ENCODE measurements at regions of chr3 and their contacts with region 1.

Region 1: GRCh38 chr3:39000008-39000450 is 51.7 kb downstream of the SCN11A start:
- DNase-seq: no peak
- ATAC-seq: peak; percentile 64
- H3K4me3 Mint-ChIP-seq: no peak overlapping the region
- H3K27ac Mint-ChIP-seq: no peak overlapping the region
- H3K4me1 Mint-ChIP-seq: no peaks in the 10 kb centered on the region
- H3K27me3 Mint-ChIP-seq: peaks cover 3% of the 10 kb centered on the region
- CTCF ChIP-seq: peak; percentile 84

Region 2: DNA sequence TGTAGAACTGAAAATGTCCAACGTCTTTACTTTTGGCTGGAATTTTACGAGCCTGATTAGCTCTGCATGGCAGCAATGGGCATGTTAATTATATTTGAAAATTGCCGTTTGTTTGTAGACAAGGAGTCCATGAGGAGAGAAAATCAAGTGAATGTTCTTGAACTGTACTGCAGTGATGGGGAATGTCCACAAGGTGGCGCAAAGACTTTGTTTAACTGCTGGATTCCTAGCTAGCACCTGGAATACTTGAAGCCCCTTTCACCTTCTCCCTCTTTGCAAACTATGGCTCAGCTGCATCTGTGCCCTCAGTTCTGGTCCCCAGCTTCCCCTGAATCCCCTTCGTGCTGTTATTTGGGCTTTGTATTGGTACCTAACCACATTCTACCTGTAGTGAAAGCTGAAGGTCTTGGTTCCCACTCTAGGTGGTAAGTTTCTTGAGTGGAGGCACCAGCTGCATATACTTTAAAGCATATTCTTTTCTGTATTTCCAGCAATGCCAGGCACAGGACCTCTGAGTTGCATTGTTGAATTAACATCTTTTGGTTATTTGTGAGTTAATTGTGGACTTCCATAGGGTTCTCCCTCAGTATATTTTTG is 478.5 kb before region 1 on chr3:
- CTCF ChIA-PET with region 1: interaction called, 22 read pairs
- POLR2A ChIA-PET with region 1: no interaction called
- intact Hi-C with region 1: no loop called
- DNase-seq: peak; percentile 78
- ATAC-seq: peak; percentile 85
- H3K4me3 Mint-ChIP-seq: no peak overlapping the region
- H3K27ac Mint-ChIP-seq: no peak overlapping the region
- H3K4me1 Mint-ChIP-seq: peaks cover 22% of the 10 kb centered on the region
- H3K27me3 Mint-ChIP-seq: no peaks in the 10 kb centered on the region
- CTCF ChIP-seq: peak; percentile 93

Region 3: DNA sequence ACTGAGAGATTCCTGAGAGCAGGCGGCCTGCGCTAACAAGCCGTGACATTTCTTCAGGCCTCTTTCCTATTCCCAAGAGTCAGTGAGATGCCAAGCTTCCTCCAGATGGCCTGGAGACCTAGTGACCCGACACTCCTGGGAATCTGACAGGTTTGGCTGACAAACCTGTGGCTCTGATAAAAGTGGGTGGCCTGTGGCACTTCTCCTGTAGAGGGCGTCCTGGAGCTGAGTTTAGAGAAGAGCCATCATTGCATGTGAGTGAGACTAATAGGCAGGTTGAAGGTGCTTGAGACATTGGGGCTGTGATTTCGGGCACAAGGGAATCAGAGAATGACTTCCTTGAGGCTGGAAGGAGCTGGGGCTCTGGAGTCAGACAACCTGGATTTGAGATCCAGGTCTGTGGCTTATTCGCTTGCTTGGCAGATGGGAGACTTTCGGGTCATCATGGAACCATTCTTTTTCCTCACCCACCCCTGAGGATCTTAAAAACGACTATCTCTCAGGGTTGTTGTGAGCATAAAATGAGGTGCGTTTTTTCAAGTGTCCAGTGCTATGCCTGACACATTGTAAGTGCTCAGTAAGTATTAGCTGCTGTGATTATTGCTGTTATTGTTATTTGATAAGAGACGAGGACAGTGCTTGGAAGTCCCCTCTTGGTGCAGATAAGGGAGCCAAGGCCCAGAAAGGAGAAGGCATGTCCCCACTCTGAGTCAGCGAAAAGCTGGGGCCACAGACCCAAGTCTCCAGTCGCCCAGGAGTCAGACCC is 261.2 kb before region 1 on chr3:
- CTCF ChIA-PET with region 1: interaction called, 13 read pairs
- POLR2A ChIA-PET with region 1: no interaction called
- intact Hi-C with region 1: loop called (anchors 10 kb)
- DNase-seq: peak; percentile 74
- ATAC-seq: no peak
- H3K4me3 Mint-ChIP-seq: no peak overlapping the region
- H3K27ac Mint-ChIP-seq: no peak overlapping the region
- H3K4me1 Mint-ChIP-seq: no peaks in the 10 kb centered on the region
- H3K27me3 Mint-ChIP-seq: peaks cover 19% of the 10 kb centered on the region
- CTCF ChIP-seq: peak; percentile 64

Region 4: GRCh38 chr3:38969317-38970235 is 30.5 kb before region 1 on chr3:
- CTCF ChIA-PET with region 1: interaction called, 16 read pairs
- POLR2A ChIA-PET with region 1: no interaction called
- intact Hi-C with region 1: no loop called
- DNase-seq: no peak
- ATAC-seq: no peak
- H3K4me3 Mint-ChIP-seq: no peak overlapping the region
- H3K27ac Mint-ChIP-seq: no peak overlapping the region
- H3K4me1 Mint-ChIP-seq: no peaks in the 10 kb centered on the region
- H3K27me3 Mint-ChIP-seq: peaks cover 5% of the 10 kb centered on the region
- CTCF ChIP-seq: no peak

Region 5: DNA sequence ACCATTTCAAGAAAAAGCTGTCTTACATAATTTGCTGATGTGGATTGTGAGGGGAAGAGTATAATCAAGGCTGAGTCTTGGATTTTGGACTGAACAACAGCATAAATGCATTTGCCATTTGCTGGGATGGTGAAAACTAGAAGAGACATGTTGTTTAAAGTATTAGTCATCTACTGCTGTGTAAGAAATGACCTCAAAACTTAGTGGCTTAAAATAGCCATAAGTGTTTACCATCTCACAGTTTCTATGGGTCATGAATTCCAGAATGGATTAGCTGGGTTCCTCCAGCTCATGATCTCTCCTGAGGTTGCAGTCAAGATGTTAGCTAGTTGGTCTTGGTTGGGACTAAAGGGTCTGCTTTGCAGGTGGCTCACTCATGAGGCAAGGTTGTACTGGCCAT is 14.4 kb before region 1 on chr3:
- CTCF ChIA-PET with region 1: interaction called, 14 read pairs
- POLR2A ChIA-PET with region 1: interaction called, 3 read pairs
- intact Hi-C with region 1: no loop called
- DNase-seq: no peak
- ATAC-seq: no peak
- H3K4me3 Mint-ChIP-seq: no peak overlapping the region
- H3K27ac Mint-ChIP-seq: no peak overlapping the region
- H3K4me1 Mint-ChIP-seq: no peaks in the 10 kb centered on the region
- H3K27me3 Mint-ChIP-seq: peaks cover 8% of the 10 kb centered on the region
- CTCF ChIP-seq: no peak

Region 6: GRCh38 chr3:39013289-39013688 is 13.3 kb after region 1 on chr3:
- CTCF ChIA-PET with region 1: interaction called, 25 read pairs
- POLR2A ChIA-PET with region 1: no interaction called
- intact Hi-C with region 1: no loop called
- DNase-seq: no peak
- ATAC-seq: no peak
- H3K4me3 Mint-ChIP-seq: no peak overlapping the region
- H3K27ac Mint-ChIP-seq: no peak overlapping the region
- H3K4me1 Mint-ChIP-seq: peaks cover 3% of the 10 kb centered on the region
- H3K27me3 Mint-ChIP-seq: peaks cover 7% of the 10 kb centered on the region
- CTCF ChIP-seq: no peak

Region 7: DNA sequence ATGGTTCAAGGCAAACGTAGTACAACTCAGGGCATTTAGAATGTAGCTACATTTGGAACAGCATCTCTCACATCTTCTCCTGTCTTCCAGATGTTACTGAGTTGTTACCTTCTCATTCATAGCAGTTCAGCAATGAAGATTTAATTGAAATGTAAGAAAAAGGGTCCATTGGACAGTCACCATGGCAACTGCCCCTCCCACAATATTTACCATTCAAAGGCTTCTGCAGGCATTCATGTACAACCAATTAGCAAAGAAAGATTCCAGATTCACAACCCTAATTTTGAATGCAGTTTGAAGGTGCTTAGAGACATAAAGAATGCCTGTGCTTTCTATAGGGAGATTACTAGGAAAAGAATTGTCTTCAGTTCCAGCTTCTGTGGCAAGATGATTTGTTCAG is 29.5 kb after region 1 on chr3:
- CTCF ChIA-PET with region 1: interaction called, 13 read pairs
- POLR2A ChIA-PET with region 1: no interaction called
- intact Hi-C with region 1: no loop called
- DNase-seq: no peak
- ATAC-seq: no peak
- H3K4me3 Mint-ChIP-seq: no peak overlapping the region
- H3K27ac Mint-ChIP-seq: no peak overlapping the region
- H3K4me1 Mint-ChIP-seq: no peaks in the 10 kb centered on the region
- H3K27me3 Mint-ChIP-seq: peaks cover 13% of the 10 kb centered on the region
- CTCF ChIP-seq: no peak